Cardiac septum (tissue), 1 donor: ENCODE measurements at regions of chr12 and their contacts with region 1.

Region 1: DNA sequence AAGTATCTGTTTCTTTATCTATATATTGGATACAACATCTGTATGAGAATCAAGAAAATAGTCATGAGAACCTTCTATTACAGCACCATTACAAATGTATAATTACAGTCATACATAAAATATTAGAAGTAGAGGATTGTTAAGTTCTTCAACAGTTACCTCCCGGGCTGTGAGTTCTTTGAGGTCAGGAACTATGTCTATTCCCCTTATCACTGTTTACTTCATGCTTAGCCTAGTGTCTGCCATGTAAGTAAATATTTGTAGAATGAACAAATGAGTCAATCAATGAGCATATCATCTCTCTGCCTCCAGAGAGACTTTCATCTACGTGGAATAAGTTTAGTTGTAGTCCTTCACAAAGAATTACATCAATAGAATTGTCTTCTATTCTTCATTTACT is 47.2 kb downstream of the PUS7L start:
- DNase-seq: no peak

Region 2: DNA sequence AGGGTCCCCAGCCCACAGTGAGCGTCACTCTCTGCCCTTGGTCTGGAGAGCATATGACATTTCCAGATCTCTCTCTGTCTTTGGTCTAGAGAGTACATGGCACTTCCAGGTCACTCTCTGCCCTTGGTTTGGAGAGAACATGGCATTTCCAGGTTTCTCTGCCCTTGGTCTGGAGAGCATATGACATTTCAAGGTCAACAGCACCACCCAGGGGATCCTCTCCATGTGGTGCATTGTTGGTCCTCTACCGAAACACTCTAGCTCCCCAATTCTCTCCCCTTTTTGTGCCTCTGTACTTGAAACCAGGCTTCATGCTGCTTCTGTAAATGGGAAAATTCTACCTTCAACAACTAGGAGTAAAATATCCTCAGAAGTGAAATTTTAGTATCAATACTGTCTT is 765.3 kb after region 1 on chr12:
- intact Hi-C with region 1: loop called (anchors 10 kb)
- DNase-seq: no peak